Sigmoid colon (tissue), 7 donors: ENCODE measurements at regions of chr6 and their contacts with region 1.

Region 1: DNA sequence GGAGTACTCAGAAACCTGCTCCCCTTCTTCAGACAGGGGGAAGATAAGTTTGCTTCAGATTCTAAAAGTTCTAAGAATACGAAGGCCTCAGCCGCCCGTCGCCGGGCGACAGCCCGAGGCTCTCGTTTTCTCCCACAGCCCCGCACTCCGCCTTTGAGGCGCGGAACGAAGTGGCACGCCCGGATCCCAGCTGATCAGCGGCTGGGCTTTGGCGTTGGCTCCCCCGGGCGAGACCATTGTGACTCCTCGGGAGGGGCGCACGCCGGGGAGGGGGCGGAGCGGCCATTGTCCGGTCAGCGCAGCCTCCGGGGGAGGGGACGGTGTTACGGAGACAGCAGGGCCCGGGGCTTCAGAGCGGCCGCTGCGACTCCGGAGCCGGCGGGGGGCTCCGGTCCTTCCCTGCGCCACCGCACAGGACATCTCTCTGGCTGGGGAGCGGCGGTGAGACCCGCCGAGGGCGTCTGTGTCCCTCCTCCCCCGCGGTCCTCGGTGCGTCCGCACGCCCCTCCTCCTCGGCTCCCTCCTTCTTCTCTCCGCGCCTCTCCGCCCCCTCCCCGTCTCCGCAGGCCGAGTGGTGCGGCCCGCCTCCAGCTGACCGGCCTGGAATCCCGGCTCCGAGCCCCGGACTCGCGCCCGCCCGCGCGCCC is at the start of gene ZFAND3:
- DNase-seq: peak; percentile 98
- H3K4me3 ChIP-seq: peak within 1 kb of the TSS; percentile 88 to 94 (median 93)
- H3K27ac ChIP-seq: peak within 1 kb of the TSS; percentile 97 to 98 (median 98)
- H3K4me1 ChIP-seq: peaks cover 0 to 50% (median 45%) of the 10 kb centered on the region in 4 donors
- H3K27me3 ChIP-seq: no peaks in the 10 kb centered on the region
- CTCF ChIP-seq: no peak
- EP300 ChIP-seq: no peak
- POLR2A ChIP-seq: no peak
- total RNA-seq, gene ZFAND3: 34.4 to 54.8 (median 40.2) TPM

Region 2: DNA sequence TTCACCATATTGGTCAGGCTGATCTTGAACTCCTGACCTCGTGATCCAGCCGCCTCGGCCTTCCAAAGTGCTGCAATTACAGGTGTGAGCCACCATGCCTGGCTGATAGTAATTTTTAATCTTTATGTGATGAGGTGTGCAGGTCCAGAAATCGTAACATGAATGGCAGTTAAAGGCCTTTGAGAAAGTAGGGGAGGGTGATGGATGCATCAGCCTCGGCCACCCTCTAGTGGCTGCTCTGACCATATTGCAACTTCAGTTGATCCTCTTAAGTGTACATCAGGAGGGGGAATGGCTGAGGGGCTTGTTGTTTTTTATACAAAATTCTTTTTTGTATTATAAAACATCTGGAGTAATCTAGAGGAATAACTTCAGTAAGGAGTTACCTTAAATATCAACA is 193.3 kb after region 1 on chr6:
- intact Hi-C with region 1: loop called (anchors 10 kb)
- DNase-seq: no peak
- H3K4me3 ChIP-seq: no peak overlapping the region
- H3K27ac ChIP-seq: no peak overlapping the region
- H3K4me1 ChIP-seq: peaks cover 0 to 42% (median 27%) of the 10 kb centered on the region in 4 donors
- H3K27me3 ChIP-seq: no peaks in the 10 kb centered on the region
- CTCF ChIP-seq: peak in 3 of 4 experiments; percentile 34 to 52 (median 43)
- EP300 ChIP-seq: no peak
- POLR2A ChIP-seq: no peak

Region 3: GRCh38 chr6:38639498-38640215 is 820.4 kb after region 1 on chr6 and contains the start of gene BTBD9:
- intact Hi-C with region 1: loop called (anchors 5 kb)
- DNase-seq: peak; percentile 90
- H3K4me3 ChIP-seq: peak within 1 kb of the TSS; percentile 80 to 92 (median 84)
- H3K27ac ChIP-seq: peak within 1 kb of the TSS; percentile 92 to 94 (median 94)
- H3K4me1 ChIP-seq: peaks cover 0 to 25% (median 13%) of the 10 kb centered on the region in 4 donors
- H3K27me3 ChIP-seq: no peaks in the 10 kb centered on the region
- CTCF ChIP-seq: no peak
- EP300 ChIP-seq: peak in 1 of 4 donors; percentile 42
- POLR2A ChIP-seq: peak; percentile 10 to 48
- total RNA-seq, gene BTBD9: 10.5 to 20.8 (median 12.8) TPM

Region 4: DNA sequence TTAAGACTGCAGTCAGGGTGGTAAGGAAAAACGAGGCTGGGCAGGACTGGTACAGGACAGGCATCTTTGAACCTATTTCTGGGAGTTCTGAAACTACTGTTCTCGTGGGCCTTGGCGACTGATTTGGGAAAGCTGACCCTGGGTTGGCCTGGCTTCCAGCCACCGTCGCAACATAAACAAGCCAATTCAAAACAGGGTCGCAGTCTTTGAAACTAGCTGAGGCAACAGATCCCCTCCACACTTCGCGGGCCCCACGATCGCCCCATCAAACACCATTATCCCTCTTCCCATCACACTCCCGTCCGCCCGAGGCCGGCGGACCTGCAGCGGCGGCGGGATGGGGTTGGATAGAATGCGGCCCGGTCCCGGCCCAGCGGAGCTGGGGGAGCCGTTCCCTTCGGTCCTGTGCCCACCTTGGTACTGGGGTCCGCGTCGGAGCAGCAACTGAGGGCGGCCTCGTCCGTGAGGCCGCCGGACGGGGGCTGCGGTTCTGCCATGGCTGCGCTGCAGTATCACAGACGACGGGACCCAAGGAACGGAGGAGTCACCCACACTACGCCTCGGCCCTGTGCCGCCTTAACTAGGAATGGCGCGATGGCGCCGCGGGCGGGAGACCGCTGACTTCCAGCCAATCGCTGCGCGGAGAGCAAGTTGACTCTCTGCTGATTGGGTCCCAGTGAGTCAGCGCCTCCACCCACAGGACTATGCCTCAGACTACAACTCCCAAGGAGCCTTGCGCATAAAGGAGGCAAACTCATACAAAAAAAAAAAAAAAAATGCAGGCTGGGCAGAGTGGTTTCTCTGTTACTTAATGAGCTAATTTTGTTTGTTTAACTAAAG is 883.5 kb after region 1 on chr6 and contains the start of gene GLO1:
- intact Hi-C with region 1: loop called (anchors 5 kb)
- DNase-seq: peak; percentile 99
- H3K4me3 ChIP-seq: peak within 1 kb of the TSS; percentile 68 to 95 (median 85)
- H3K27ac ChIP-seq: peak within 1 kb of the TSS; percentile 92 to 97 (median 95)
- H3K4me1 ChIP-seq: peaks cover 0 to 12% (median 6%) of the 10 kb centered on the region in 4 donors
- H3K27me3 ChIP-seq: no peaks in the 10 kb centered on the region
- CTCF ChIP-seq: no peak
- EP300 ChIP-seq: no peak
- POLR2A ChIP-seq: peak; percentile 78
- total RNA-seq, gene GLO1: 92.8 to 98.5 (median 96.0) TPM

Region 5: GRCh38 chr6:38909015-38909730 is 1089.9 kb after region 1 on chr6:
- intact Hi-C with region 1: no loop called
- DNase-seq: no peak
- H3K4me3 ChIP-seq: no peak overlapping the region
- H3K27ac ChIP-seq: no peak overlapping the region
- H3K4me1 ChIP-seq: no peaks in the 10 kb centered on the region
- H3K27me3 ChIP-seq: no peaks in the 10 kb centered on the region
- CTCF ChIP-seq: no peak
- EP300 ChIP-seq: no peak
- POLR2A ChIP-seq: no peak

Region 6: DNA sequence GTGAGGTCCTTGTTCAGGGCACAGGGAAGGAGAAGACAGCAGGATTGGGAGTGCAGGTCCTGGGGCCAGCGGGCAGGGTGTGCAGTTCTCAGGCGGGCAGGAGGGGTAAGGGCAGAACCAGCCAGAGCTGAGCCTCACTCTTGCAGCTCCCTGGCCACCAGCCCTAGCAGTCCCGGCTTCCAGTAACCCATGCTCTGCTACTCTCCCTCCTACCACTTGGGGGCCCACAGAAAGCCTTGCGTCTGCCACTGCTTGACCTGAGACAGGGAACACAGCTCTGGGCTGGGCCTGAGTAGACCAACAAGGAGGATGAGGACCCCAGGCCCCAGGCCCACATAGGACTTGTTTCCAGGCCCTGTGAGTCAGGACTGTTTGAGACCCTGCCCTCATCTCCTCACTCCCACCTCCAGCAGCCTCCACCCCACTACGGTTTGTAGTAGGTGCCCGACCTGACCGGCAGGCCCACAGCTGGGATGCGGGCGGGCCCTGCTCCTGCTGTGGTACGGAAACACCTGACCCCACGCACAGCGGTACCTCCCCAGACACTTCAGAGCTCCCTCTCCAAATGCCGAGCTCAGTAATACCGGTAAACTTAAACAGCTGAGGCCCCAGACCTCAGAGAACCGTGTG is 1370.7 kb after region 1 on chr6:
- intact Hi-C with region 1: no loop called
- DNase-seq: no peak
- H3K4me3 ChIP-seq: no peak overlapping the region
- H3K27ac ChIP-seq: peak overlapping the region in 2 of 4 donors; percentile 30 to 31
- H3K4me1 ChIP-seq: no peaks in the 10 kb centered on the region
- H3K27me3 ChIP-seq: no peaks in the 10 kb centered on the region
- CTCF ChIP-seq: peak in 2 of 4 experiments; percentile 21
- EP300 ChIP-seq: no peak
- POLR2A ChIP-seq: no peak